Endothelial cell of umbilical vein (primary cell): ENCODE measurements at regions of chr18 and their contacts with region 1.

Region 1: GRCh38 chr18:40935423-40935822 is 1019.6 kb upstream of the PIK3C3 start:
- DNase-seq: peak; percentile 42
- H3K4me3 ChIP-seq: no peak overlapping the region
- H3K27ac ChIP-seq: no peak overlapping the region
- H3K4me1 ChIP-seq: no peaks in the 10 kb centered on the region
- H3K27me3 ChIP-seq: no peaks in the 10 kb centered on the region
- CTCF ChIP-seq: peak; percentile 14 to 37
- POLR2A ChIP-seq: no peak

Region 2: GRCh38 chr18:40738321-40738880 is 197.0 kb before region 1 on chr18:
- CTCF ChIA-PET with region 1: no interaction called
- POLR2A ChIA-PET with region 1: no interaction called
- dilution Hi-C with region 1: no loop called
- intact Hi-C with region 1: no loop called
- DNase-seq: no peak
- H3K4me3 ChIP-seq: no peak overlapping the region
- H3K27ac ChIP-seq: no peak overlapping the region
- H3K4me1 ChIP-seq: no peaks in the 10 kb centered on the region
- H3K27me3 ChIP-seq: no peaks in the 10 kb centered on the region
- CTCF ChIP-seq: no peak
- POLR2A ChIP-seq: no peak

Region 3: GRCh38 chr18:41096504-41096903 is 161.1 kb after region 1 on chr18:
- CTCF ChIA-PET with region 1: interaction called, 19 read pairs
- POLR2A ChIA-PET with region 1: no interaction called
- dilution Hi-C with region 1: no loop called
- intact Hi-C with region 1: no loop called
- DNase-seq: peak; percentile 36
- H3K4me3 ChIP-seq: no peak overlapping the region
- H3K27ac ChIP-seq: no peak overlapping the region
- H3K4me1 ChIP-seq: no peaks in the 10 kb centered on the region
- H3K27me3 ChIP-seq: no peaks in the 10 kb centered on the region
- CTCF ChIP-seq: no peak
- POLR2A ChIP-seq: no peak

Region 4: GRCh38 chr18:41378598-41378997 is 443.2 kb after region 1 on chr18:
- CTCF ChIA-PET with region 1: interaction called, 14 read pairs
- POLR2A ChIA-PET with region 1: interaction called, 3 read pairs
- dilution Hi-C with region 1: no loop called
- intact Hi-C with region 1: no loop called
- DNase-seq: peak; percentile 50
- H3K4me3 ChIP-seq: no peak overlapping the region
- H3K27ac ChIP-seq: no peak overlapping the region
- H3K4me1 ChIP-seq: no peaks in the 10 kb centered on the region
- H3K27me3 ChIP-seq: no peaks in the 10 kb centered on the region
- CTCF ChIP-seq: no peak
- POLR2A ChIP-seq: no peak

Region 5: GRCh38 chr18:41391616-41392595 is 456.5 kb after region 1 on chr18:
- CTCF ChIA-PET with region 1: interaction called, 14 read pairs
- POLR2A ChIA-PET with region 1: no interaction called
- dilution Hi-C with region 1: no loop called
- intact Hi-C with region 1: loop called (anchors 5 kb)
- DNase-seq: peak; percentile 54
- H3K4me3 ChIP-seq: peak overlapping the region in 1 of 3 experiments; percentile 13
- H3K27ac ChIP-seq: no peak overlapping the region
- H3K4me1 ChIP-seq: no peaks in the 10 kb centered on the region
- H3K27me3 ChIP-seq: no peaks in the 10 kb centered on the region
- CTCF ChIP-seq: peak; percentile 35 to 62
- POLR2A ChIP-seq: no peak

Region 6: GRCh38 chr18:41917181-41917580 is 981.8 kb after region 1 on chr18:
- CTCF ChIA-PET with region 1: no interaction called
- POLR2A ChIA-PET with region 1: no interaction called
- dilution Hi-C with region 1: no loop called
- intact Hi-C with region 1: loop called (anchors 10 kb)
- DNase-seq: no peak
- H3K4me3 ChIP-seq: no peak overlapping the region
- H3K27ac ChIP-seq: no peak overlapping the region
- H3K4me1 ChIP-seq: no peaks in the 10 kb centered on the region
- H3K27me3 ChIP-seq: peaks cover 0 to 2% of the 10 kb centered on the region in 2 experiments
- CTCF ChIP-seq: no peak
- POLR2A ChIP-seq: no peak